Activated T-helper 2 cell treated with anti-CD3 and anti-CD28 coated beads, Interferon-gamma antibody, Interleukin-2, Interleukin-4, amounts not matched to agents 10 μg/mL and 5 μg/mL and 100 μg/mL, durations not matched to agents 14 hours and 24 hours and 36 hours (primary cell): ENCODE measurements at regions of chr18 and their contacts with region 1.

Region 1: GRCh38 chr18:41982942-41983660 is 28.1 kb downstream of the PIK3C3 start:
- DNase-seq: no peak
- H3K4me3 Mint-ChIP-seq: peak overlapping the region; percentile 28
- H3K27ac Mint-ChIP-seq: peak overlapping the region; percentile 88
- H3K4me1 Mint-ChIP-seq: peaks cover 22% of the 10 kb centered on the region
- H3K27me3 Mint-ChIP-seq: no peaks in the 10 kb centered on the region

Region 2: GRCh38 chr18:41949206-41949920 is 33.7 kb before region 1 on chr18:
- intact Hi-C with region 1: loop called (anchors 5 kb)
- DNase-seq: no peak
- H3K4me3 Mint-ChIP-seq: no peak overlapping the region
- H3K27ac Mint-ChIP-seq: peak overlapping the region; percentile 78
- H3K4me1 Mint-ChIP-seq: peaks cover 21% of the 10 kb centered on the region
- H3K27me3 Mint-ChIP-seq: peaks cover 11% of the 10 kb centered on the region

Region 3: GRCh38 chr18:41954827-41955613 is 28.1 kb before region 1 on chr18 and contains the start of gene PIK3C3:
- intact Hi-C with region 1: loop called (anchors 1 kb)
- DNase-seq: peak; percentile 93
- H3K4me3 Mint-ChIP-seq: peak within 1 kb of the TSS; percentile 100
- H3K27ac Mint-ChIP-seq: peak within 1 kb of the TSS; percentile 98
- H3K4me1 Mint-ChIP-seq: peaks cover 23% of the 10 kb centered on the region
- H3K27me3 Mint-ChIP-seq: peaks cover 3% of the 10 kb centered on the region
- total RNA-seq, gene PIK3C3: 50.4 and 51.6 TPM in 2 replicates

Region 4: DNA sequence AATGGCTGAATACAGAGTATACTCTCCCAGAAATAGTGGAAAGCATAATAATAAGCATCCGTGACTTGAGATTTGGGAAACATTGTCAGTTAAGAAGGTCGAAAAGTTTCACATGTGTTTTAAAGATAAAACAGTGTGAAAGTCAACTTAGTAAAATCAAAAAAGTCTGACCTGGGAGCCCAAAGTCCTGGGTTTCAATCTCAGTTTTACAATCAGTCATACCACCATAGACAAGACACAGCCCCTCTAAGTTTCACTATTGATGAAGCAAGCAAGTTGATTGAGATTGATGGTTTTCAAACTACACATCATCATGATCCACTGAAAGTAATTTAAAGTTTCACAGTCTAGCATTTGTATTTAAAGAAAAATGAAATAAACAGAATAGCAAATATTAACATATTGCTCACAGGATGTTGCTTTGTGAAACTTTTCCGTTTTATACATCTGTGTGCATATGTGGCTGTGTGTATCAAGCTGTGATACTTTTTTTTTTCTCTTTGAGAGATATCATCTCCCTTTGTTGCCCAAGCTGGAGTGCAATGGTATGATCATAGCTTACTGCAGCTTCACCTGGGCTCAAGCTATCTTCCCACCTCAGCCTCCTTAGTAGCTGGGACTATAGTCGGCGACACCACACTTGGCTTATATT is 43.0 kb after region 1 on chr18:
- intact Hi-C with region 1: loop called (anchors 1 kb)
- DNase-seq: no peak
- H3K4me3 Mint-ChIP-seq: no peak overlapping the region
- H3K27ac Mint-ChIP-seq: no peak overlapping the region
- H3K4me1 Mint-ChIP-seq: peaks cover 31% of the 10 kb centered on the region
- H3K27me3 Mint-ChIP-seq: no peaks in the 10 kb centered on the region

Region 5: DNA sequence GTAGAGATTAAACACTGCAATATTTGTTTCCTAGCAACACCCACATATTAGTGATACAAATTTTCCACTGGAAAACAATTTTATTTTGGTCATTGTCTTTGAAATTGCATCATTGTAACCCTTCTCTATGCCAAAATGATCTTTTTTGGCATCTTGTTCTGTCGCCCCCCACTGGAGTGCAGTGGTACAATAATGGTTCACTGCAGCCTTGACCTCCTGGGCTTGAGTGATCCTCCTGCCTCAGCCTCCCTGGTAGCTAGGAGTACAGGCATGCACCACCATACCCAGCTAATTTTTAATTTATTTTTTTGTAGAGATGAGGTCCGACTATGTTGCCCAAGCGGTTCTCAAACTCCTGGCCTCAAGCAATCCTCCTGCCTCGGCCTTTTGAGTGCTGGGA is 89.3 kb after region 1 on chr18:
- intact Hi-C with region 1: no loop called
- DNase-seq: no peak
- H3K4me3 Mint-ChIP-seq: no peak overlapping the region
- H3K27ac Mint-ChIP-seq: no peak overlapping the region
- H3K4me1 Mint-ChIP-seq: peaks cover 2% of the 10 kb centered on the region
- H3K27me3 Mint-ChIP-seq: no peaks in the 10 kb centered on the region